PC-9 (cell line): ENCODE measurements at regions of chr20 and their contacts with region 1.

Region 1: DNA sequence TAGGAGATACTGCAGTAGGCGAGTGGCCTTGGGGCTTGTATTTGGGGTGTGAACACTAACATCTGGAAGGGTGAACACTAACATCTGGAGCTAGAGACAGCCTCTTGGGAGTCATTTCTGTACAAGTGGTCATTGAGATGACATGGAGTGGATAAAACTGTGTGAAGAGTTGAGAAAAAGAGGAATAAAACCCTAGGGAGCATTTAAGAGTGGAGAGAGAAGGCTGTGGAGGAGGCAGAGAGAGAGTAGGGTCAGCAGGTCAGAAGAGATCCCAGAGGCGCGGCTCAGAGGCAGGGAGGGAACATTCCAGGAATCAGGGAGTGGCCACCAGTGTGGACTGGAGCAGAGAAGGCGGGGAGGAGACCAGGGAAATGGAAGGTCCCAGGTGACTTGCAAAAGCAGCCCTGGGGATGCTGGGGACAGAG is 202.0 kb upstream of the RNF24 start:
- DNase-seq: peak; percentile 44 to 67
- H3K4me3 ChIP-seq: no peak overlapping the region
- H3K27ac ChIP-seq: no peak overlapping the region
- H3K4me1 ChIP-seq: peaks cover 16% of the 10 kb centered on the region
- H3K27me3 ChIP-seq: no peaks in the 10 kb centered on the region
- CTCF ChIP-seq: no peak

Region 2: GRCh38 chr20:4187147-4187546 is 30.2 kb before region 1 on chr20:
- CTCF ChIA-PET with region 1: no interaction called
- POLR2A ChIA-PET with region 1: interaction called, 24 read pairs
- intact Hi-C with region 1: no loop called
- DNase-seq: no peak
- H3K4me3 ChIP-seq: no peak overlapping the region
- H3K27ac ChIP-seq: no peak overlapping the region
- H3K4me1 ChIP-seq: peaks cover 8% of the 10 kb centered on the region
- H3K27me3 ChIP-seq: no peaks in the 10 kb centered on the region
- CTCF ChIP-seq: no peak

Region 3: GRCh38 chr20:4406627-4407026 is 189.3 kb after region 1 on chr20:
- CTCF ChIA-PET with region 1: interaction called, 10 read pairs
- POLR2A ChIA-PET with region 1: no interaction called
- intact Hi-C with region 1: no loop called
- DNase-seq: no peak
- H3K4me3 ChIP-seq: no peak overlapping the region
- H3K27ac ChIP-seq: no peak overlapping the region
- H3K4me1 ChIP-seq: no peaks in the 10 kb centered on the region
- H3K27me3 ChIP-seq: peaks cover 13% of the 10 kb centered on the region; the same call in 1 of the 2 replicates
- CTCF ChIP-seq: no peak

Region 4: GRCh38 chr20:4573564-4574355 is 356.4 kb after region 1 on chr20:
- CTCF ChIA-PET with region 1: interaction called, 13 read pairs
- POLR2A ChIA-PET with region 1: no interaction called
- intact Hi-C with region 1: no loop called
- DNase-seq: peak; percentile 17 to 70
- H3K4me3 ChIP-seq: no peak overlapping the region
- H3K27ac ChIP-seq: no peak overlapping the region
- H3K4me1 ChIP-seq: no peaks in the 10 kb centered on the region
- H3K27me3 ChIP-seq: no peaks in the 10 kb centered on the region
- CTCF ChIP-seq: no peak